ENCODE measurements at regions of chr22 and their contacts with region 1.

Region 1: GRCh38 chr22:40076702-40077645 is 82.2 kb downstream of the FAM83F start:
- DNase-seq: no peak
- H3K4me3 Mint-ChIP-seq: peak overlapping the region; percentile 62
- H3K27ac Mint-ChIP-seq: peak overlapping the region; percentile 59
- H3K4me1 Mint-ChIP-seq: peaks cover 51% of the 10 kb centered on the region
- H3K27me3 Mint-ChIP-seq: no peaks in the 10 kb centered on the region

Region 2: DNA sequence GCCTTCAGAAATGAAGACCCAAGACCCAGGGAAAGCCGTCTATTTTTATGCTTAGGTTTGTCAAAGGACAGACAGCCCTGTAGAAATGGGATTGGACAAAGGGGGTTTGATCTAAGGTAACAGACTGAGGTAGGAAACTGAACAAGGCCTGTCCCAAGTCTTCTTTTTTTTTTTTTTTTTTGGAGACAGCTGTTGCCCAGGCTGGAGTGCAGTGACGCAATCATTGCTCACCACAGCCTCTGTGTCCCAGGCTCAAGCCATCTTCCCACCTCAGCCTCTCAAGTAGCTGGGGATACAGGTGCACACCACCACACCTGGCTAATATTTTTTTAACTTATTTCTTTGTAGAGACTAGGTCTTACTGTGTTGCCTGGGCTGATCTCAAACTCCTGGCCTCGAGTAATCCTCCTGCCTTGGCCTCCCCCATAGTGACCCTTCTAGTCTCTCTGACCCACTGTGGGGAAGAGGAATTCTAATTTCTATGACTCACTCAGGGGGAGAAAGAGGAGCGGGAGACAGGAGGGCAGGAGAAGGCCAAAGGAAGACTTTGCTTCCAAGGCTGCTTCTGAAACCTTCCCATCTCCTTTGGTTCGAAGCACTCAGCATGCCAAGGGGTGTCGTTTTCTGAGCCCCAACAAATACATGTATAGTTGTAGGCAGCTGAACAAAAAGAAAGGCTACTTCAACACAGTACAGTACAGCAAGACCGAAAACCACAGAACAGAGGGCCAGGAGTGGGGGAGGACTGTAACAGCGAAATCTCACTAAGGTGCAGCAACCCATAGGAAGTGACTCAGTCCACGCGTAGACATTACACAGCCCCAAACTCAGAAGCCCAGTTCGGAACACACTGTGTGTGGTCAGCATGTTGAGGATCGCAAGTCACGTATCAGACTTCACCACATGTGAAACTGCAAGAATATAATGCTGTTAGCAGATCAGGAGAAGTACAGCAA is 115.9 kb before region 1 on chr22:
- CTCF ChIA-PET with region 1: no interaction called
- intact Hi-C with region 1: no loop called
- DNase-seq: peak; percentile 82
- H3K4me3 Mint-ChIP-seq: peak overlapping the region; percentile 36
- H3K27ac Mint-ChIP-seq: peak overlapping the region; percentile 47
- H3K4me1 Mint-ChIP-seq: peaks cover 54% of the 10 kb centered on the region
- H3K27me3 Mint-ChIP-seq: no peaks in the 10 kb centered on the region

Region 3: GRCh38 chr22:40094485-40094884 is 17.5 kb after region 1 on chr22:
- CTCF ChIA-PET with region 1: no interaction called
- intact Hi-C with region 1: loop called (anchors 2 kb)
- DNase-seq: no peak
- H3K4me3 Mint-ChIP-seq: peak overlapping the region; percentile 65
- H3K27ac Mint-ChIP-seq: peak overlapping the region; percentile 76
- H3K4me1 Mint-ChIP-seq: peaks cover 67% of the 10 kb centered on the region
- H3K27me3 Mint-ChIP-seq: no peaks in the 10 kb centered on the region

Measured in activated naive CD4-positive, alpha-beta T cell treated with anti-CD3 and anti-CD28 coated beads for 36 hours (primary cell).